ENCODE measurements at regions of chr16 and their contacts with region 1.

Region 1: GRCh38 chr16:87976665-87977064 is 25.4 kb downstream of the BANP start:
- DNase-seq: no peak
- H3K4me3 Mint-ChIP-seq: no peak overlapping the region
- H3K27ac Mint-ChIP-seq: no peak overlapping the region
- H3K4me1 Mint-ChIP-seq: peaks cover 46% of the 10 kb centered on the region
- H3K27me3 Mint-ChIP-seq: no peaks in the 10 kb centered on the region

Region 2: DNA sequence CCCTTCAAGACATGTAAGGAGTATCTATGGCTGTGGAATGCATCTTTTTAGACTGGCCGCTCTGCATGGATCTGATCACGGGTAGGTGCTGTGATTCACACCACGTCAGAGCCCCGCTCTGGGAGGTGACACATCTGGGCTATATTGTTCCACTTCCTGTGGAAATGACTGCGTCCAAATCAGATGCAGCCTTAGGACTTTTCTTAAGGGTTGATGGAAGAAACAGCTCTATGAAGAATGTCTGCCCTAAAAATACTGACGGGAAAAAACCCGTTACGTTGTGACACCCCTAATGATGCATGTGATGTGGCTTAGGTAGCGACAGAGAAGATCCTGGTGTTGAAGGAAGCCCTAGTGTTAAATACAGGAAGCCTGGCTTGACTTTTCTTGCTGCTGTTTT is 13.3 kb before region 1 on chr16:
- intact Hi-C with region 1: loop called (anchors 1 kb)
- DNase-seq: peak; percentile 43
- H3K4me3 Mint-ChIP-seq: no peak overlapping the region
- H3K27ac Mint-ChIP-seq: peak overlapping the region; percentile 87
- H3K4me1 Mint-ChIP-seq: peaks cover 57% of the 10 kb centered on the region
- H3K27me3 Mint-ChIP-seq: no peaks in the 10 kb centered on the region

Region 3: DNA sequence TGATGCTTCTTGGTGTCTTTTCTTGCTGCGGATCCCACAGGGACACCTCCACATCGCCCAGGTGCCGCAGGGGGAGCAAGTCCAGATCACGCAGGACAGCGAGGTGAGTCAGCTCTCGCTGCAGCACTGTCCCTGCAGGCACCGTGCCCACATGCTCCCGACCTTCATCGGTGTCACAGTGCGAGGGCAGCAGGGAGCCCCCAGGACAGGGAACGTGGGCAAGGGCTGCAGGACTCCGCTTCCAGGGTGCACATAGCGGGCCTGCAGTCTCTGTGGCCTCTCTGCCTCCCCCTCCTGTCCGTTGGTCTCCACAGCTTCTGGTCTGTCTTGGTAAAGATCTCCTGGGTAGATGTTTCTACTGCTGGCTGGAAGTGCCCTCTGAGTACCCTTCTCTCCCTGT is 58.6 kb after region 1 on chr16:
- intact Hi-C with region 1: no loop called
- DNase-seq: no peak
- H3K4me3 Mint-ChIP-seq: no peak overlapping the region
- H3K27ac Mint-ChIP-seq: no peak overlapping the region
- H3K4me1 Mint-ChIP-seq: no peaks in the 10 kb centered on the region
- H3K27me3 Mint-ChIP-seq: no peaks in the 10 kb centered on the region